T-cell (primary cell): ENCODE measurements at regions of chr16 and their contacts with region 1.

Region 1: GRCh38 chr16:69157196-69157595 is 24.7 kb downstream of the UTP4 start:
- DNase-seq: no peak
- ATAC-seq: no peak
- H3K4me3 ChIP-seq: no peak overlapping the region
- H3K4me3 Mint-ChIP-seq: no peak overlapping the region
- H3K27ac ChIP-seq: no peak overlapping the region
- H3K27ac Mint-ChIP-seq: no peak overlapping the region
- H3K4me1 ChIP-seq: no peaks in the 10 kb centered on the region
- H3K4me1 Mint-ChIP-seq: no peaks in the 10 kb centered on the region
- H3K27me3 ChIP-seq: no peaks in the 10 kb centered on the region
- H3K27me3 Mint-ChIP-seq: no peaks in the 10 kb centered on the region

Region 2: GRCh38 chr16:68425498-68426350 is 731.5 kb before region 1 on chr16:
- CTCF ChIA-PET with region 1: no interaction called
- POLR2A ChIA-PET with region 1: interaction called in 1 of 2 experiments, 13 read pairs
- DNase-seq: no peak
- ATAC-seq: peak; percentile 69 to 85 (median 73)
- H3K4me3 ChIP-seq: no peak overlapping the region
- H3K4me3 Mint-ChIP-seq: peak overlapping the region in 1 of 3 donors; percentile 52
- H3K27ac ChIP-seq: peak overlapping the region; percentile 10
- H3K27ac Mint-ChIP-seq: peak overlapping the region; percentile 66 to 73
- H3K4me1 ChIP-seq: peaks cover 4 to 31% of the 10 kb centered on the region in 2 experiments
- H3K4me1 Mint-ChIP-seq: peaks cover 30 to 57% (median 52%) of the 10 kb centered on the region in 3 donors
- H3K27me3 ChIP-seq: no peaks in the 10 kb centered on the region
- H3K27me3 Mint-ChIP-seq: no peaks in the 10 kb centered on the region

Region 3: GRCh38 chr16:69260019-69260418 is 102.8 kb after region 1 on chr16:
- CTCF ChIA-PET with region 1: no interaction called
- POLR2A ChIA-PET with region 1: no interaction called
- DNase-seq: no peak
- ATAC-seq: no peak
- H3K4me3 ChIP-seq: no peak overlapping the region
- H3K4me3 Mint-ChIP-seq: no peak overlapping the region
- H3K27ac ChIP-seq: no peak overlapping the region
- H3K27ac Mint-ChIP-seq: no peak overlapping the region
- H3K4me1 ChIP-seq: no peaks in the 10 kb centered on the region
- H3K4me1 Mint-ChIP-seq: peaks cover 0 to 9% (median 7%) of the 10 kb centered on the region in 3 donors
- H3K27me3 ChIP-seq: no peaks in the 10 kb centered on the region
- H3K27me3 Mint-ChIP-seq: no peaks in the 10 kb centered on the region

Region 4: DNA sequence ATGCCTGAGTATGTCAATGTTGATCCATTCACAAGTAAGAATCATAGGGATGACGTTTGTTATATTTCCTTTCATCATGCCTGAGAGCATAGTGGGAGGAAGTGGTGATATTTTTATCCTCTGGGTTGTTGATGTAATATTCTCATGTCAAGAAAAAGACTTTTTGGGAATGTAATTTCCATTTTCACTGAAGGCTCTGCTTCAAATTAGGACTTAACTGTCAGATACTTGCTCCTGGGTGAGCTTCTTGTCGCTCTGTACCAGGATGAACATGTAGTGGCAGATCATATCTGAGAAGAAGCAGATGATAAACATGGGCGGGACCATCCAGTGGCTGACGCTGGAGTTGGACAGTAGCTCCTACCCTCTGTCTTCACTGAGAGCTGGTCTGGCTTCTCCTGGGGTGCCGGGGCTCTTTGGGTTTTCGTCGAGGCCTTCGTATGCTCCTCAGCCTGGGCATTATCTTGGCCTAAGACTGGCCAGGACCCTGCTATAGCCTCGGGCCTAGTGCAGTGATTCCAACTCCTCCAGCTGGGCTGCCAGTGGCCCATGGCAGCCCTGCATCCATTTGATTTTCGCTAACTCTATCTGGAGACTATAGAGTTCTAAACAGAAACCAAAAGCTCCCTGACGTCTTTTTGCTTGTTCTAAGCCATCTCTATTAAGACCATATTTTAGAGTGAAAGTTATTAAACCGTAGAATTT is 286.9 kb after region 1 on chr16:
- CTCF ChIA-PET with region 1: interaction called in 1 of 2 experiments, 10 read pairs
- POLR2A ChIA-PET with region 1: no interaction called
- DNase-seq: peak in 22 of 35 experiments; percentile 8 to 61 (median 27)
- ATAC-seq: peak; percentile 63 to 83 (median 80)
- H3K4me3 ChIP-seq: peak overlapping the region; percentile 15 to 28
- H3K4me3 Mint-ChIP-seq: peak overlapping the region; percentile 80 to 82 (median 81)
- H3K27ac ChIP-seq: peak overlapping the region; percentile 78
- H3K27ac Mint-ChIP-seq: peak overlapping the region; percentile 98 to 99
- H3K4me1 ChIP-seq: peaks cover 9 to 15% of the 10 kb centered on the region in 2 experiments
- H3K4me1 Mint-ChIP-seq: peaks cover 41 to 44% (median 43%) of the 10 kb centered on the region in 3 donors
- H3K27me3 ChIP-seq: no peaks in the 10 kb centered on the region
- H3K27me3 Mint-ChIP-seq: no peaks in the 10 kb centered on the region